Left lung (tissue), 14 donors: ENCODE measurements at regions of chr17 and their contacts with region 1.

Region 1: DNA sequence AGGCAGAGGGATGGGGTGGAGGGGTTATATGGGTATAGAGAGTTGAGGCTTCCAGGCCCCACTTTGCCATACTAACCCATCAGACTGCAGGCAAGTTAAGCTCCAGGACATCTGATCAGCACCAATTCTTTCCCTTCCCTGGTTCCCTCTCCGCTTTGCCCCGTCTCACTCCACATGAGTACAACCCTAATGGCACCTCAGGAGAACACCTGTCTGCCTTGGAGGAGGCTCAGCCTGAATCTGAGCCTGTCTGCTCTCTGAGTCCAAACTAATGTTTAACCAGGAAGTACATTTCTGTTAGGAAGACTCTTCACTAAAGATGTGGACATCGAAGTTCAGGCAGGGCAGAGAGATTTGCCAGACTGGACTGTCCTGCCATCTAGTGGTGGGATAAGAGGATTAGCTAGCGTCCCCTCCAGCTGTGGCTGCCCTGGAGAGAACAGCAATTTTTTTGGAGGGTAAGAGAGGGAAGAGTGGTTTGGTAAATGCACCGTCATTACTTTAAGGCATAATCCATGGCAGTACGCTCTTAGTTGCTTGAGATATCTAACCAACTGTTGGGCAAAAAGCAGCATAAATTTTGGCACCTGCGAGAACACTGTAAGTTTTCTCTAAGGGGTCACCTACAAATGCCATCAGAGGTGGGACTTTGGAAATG is 29.2 kb upstream of the LRRC75A start:
- DNase-seq: peak in 3 of 4 donors; percentile 78 to 93 (median 81)
- ATAC-seq: peak; percentile 98
- H3K4me3 ChIP-seq: no peak overlapping the region
- H3K27ac ChIP-seq: no peak overlapping the region
- H3K4me1 ChIP-seq: peaks cover 2 to 7% of the 10 kb centered on the region in 2 donors
- H3K27me3 ChIP-seq: peaks cover 0 to 29% of the 10 kb centered on the region in 2 donors
- CTCF ChIP-seq: peak; percentile 78 to 92

Region 2: DNA sequence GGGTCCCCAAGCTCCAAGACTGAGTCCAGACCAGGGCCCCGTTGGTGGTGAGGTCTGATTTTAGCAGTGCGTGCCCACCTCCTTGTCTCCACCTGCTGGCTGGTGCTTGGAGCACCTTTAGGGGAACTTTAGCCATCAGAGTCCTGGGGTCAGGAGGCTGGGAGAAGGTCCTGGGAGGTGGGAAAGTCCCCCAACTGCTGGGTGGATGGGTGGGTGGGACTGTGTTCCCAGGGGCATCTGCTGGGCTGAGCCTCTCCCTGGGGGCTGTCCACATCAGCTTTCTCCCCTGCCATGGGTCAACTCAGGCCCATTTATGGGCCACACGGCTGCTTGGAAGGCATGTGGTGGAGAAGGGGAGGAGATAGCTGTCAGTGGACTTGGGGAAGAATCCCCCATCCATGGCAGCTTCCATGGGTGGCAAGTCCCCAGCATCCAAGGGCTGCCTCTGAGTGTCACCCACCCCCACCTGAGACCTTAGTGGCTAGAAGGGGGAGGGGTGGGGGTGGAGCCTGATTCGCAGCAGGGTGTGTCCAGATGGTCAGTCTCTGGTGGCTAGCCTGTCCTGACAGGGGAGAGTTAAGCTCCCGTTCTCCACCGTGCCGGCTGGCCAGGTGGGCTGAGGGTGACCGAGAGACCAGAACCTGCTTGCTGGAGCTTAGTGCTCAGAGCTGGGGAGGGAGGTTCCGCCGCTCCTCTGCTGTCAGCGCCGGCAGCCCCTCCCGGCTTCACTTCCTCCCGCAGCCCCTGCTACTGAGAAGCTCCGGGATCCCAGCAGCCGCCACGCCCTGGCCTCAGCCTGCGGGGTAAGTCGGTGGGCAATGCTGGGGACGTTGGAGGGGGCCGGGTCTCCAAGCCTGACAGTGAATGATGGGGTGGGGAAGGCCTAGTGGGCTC is 105.9 kb before region 1 on chr17 and contains the start of gene TRPV2:
- intact Hi-C with region 1: no loop called
- DNase-seq: peak in 1 of 4 donors; percentile 91
- ATAC-seq: peak; percentile 23
- H3K4me3 ChIP-seq: peak within 1 kb of the TSS; percentile 36 to 77
- H3K27ac ChIP-seq: peak within 1 kb of the TSS; percentile 88 to 93
- H3K4me1 ChIP-seq: peaks cover 22 to 43% of the 10 kb centered on the region in 2 donors
- H3K27me3 ChIP-seq: no peaks in the 10 kb centered on the region
- CTCF ChIP-seq: no peak
- polyA plus RNA-seq, gene TRPV2: 9.2 to 15.1 (median 10.7) TPM

Region 3: DNA sequence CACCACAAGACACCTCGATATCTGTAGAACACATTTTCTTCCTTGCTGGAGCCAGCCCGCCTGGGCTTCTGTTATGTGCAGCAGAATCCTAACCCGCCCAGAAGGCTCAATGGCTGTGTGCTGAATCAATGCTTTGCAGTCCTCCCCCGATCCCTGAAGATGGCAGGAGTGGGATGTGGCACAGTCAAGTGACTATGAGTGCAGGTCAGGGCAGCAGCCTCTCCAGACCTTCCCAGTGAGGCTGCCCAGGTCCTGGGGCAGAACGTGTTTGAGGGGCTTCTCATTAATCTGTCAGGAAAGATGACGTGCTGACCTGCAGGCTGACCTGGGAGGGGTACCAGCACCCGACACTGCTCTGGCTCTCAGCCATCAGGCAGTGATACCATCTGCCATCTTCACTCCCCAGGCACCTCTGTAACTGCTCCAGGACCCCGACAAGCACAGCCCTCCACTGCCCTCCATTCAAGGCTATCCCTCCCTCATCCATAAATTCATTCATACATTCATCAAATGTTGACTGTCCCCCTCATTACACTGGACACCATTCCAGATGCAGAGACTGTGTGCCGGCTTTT is 64.4 kb before region 1 on chr17:
- intact Hi-C with region 1: loop called (anchors 2 to 10 kb)
- DNase-seq: no peak
- ATAC-seq: no peak
- H3K4me3 ChIP-seq: no peak overlapping the region
- H3K27ac ChIP-seq: no peak overlapping the region
- H3K4me1 ChIP-seq: no peaks in the 10 kb centered on the region
- H3K27me3 ChIP-seq: no peaks in the 10 kb centered on the region
- CTCF ChIP-seq: no peak